ENCODE measurements at regions of chr1 and their contacts with region 1.

Region 1: DNA sequence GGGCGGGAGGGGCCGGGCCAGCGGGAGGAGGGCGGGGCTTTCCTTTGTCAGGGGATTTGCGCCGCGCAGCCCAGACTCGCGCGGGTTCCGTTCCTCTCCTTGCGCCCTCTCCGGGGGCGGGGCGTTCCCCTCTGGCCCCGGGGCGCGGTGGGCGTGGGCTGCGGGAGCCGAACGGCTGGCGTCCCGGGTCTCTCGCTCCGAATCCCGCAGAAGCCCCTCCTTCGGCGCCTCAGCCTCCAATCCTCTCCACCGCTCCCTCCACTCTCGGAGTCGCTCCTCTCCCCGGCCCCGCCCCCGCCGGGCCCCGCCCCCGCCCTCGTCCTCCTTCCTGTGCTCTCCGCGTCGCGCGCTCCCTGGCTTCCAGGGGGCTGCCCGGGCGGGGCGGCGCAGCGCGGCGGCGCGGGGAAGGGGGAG is 82.8 kb upstream of the BMP8A start:
- DNase-seq: peak; percentile 97

Region 2: DNA sequence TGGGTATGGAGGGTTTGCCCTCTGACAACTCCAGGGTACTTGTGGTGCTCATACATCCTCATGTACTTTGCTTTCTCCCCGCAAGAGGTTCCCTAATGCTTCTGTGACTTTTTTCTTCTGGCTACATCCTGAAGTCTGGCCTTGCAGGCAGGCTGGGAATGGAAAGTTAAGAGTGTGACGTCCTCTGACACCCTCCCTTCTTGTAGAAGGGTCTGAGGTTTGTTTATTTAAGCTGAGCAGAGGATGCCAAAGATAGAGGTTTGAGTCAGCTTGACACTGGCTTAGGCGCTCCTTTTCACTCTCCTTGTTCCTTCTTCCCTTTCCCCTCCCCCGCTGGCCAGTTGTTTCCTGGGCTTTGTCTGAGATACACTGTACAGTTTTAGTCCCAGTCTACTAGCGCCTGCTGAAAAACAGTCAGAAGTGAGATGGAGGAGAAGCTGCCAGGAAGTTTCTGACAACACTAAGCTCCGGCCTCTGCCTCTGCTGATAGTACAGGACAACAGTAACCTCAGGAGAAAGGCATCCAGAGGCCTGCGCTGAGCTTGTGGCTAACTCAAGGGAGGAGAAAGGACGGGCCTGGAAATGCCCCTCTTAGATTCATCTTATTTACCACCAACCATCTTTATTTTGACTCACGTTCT is 204.1 kb before region 1 on chr1 and contains the start of gene MACF1:
- intact Hi-C with region 1: loop called (anchors 5 kb)
- DNase-seq: peak; percentile 90
- total RNA-seq, gene MACF1: 331 TPM

Region 3: GRCh38 chr1:39395357-39395831 is 13.3 kb before region 1 on chr1:
- intact Hi-C with region 1: loop called (anchors 2 kb)
- DNase-seq: no peak

Region 4: GRCh38 chr1:39745016-39745670 is 336.5 kb after region 1 on chr1:
- intact Hi-C with region 1: no loop called
- DNase-seq: no peak

Region 5: GRCh38 chr1:39776400-39776713 is 367.7 kb after region 1 on chr1:
- intact Hi-C with region 1: no loop called
- DNase-seq: peak; percentile 57

Measured in cardiac septum (tissue), 1 donor.